ENCODE measurements at regions of chr6 and their contacts with region 1.

Region 1: GRCh38 chr6:57172136-57173055 is at the start of gene BAG2:
- DNase-seq: peak; percentile 92 to 93
- H3K4me3 ChIP-seq: peak within 1 kb of the TSS; percentile 57
- H3K4me3 Mint-ChIP-seq: peak within 1 kb of the TSS; percentile 95
- H3K27ac Mint-ChIP-seq: peak within 1 kb of the TSS; percentile 93
- H3K4me1 ChIP-seq: peaks cover 6% of the 10 kb centered on the region; the same call in 1 of the 2 replicates
- H3K4me1 Mint-ChIP-seq: peaks cover 21% of the 10 kb centered on the region
- H3K27me3 ChIP-seq: no peaks in the 10 kb centered on the region
- H3K27me3 Mint-ChIP-seq: no peaks in the 10 kb centered on the region
- CTCF ChIP-seq: peak in 1 of 2 experiments; percentile 26
- total RNA-seq, gene BAG2: 9.5 and 10.4 TPM in 2 replicates

Region 2: GRCh38 chr6:56902641-56903464 is 269.5 kb before region 1 on chr6:
- CTCF ChIA-PET with region 1: no interaction called
- POLR2A ChIA-PET with region 1: no interaction called
- intact Hi-C with region 1: loop called (anchors 5 kb)
- DNase-seq: peak in 1 of 2 experiments; percentile 13
- H3K4me3 ChIP-seq: no peak overlapping the region
- H3K4me3 Mint-ChIP-seq: peak overlapping the region; percentile 0
- H3K27ac Mint-ChIP-seq: no peak overlapping the region
- H3K4me1 ChIP-seq: 0 out of 2 replicates have a peak, but pooled peaks cover 6% of the 10 kb centered on the region
- H3K4me1 Mint-ChIP-seq: peaks cover 22% of the 10 kb centered on the region
- H3K27me3 ChIP-seq: no peaks in the 10 kb centered on the region
- H3K27me3 Mint-ChIP-seq: peaks cover 2% of the 10 kb centered on the region
- CTCF ChIP-seq: peak; percentile 67

Region 3: DNA sequence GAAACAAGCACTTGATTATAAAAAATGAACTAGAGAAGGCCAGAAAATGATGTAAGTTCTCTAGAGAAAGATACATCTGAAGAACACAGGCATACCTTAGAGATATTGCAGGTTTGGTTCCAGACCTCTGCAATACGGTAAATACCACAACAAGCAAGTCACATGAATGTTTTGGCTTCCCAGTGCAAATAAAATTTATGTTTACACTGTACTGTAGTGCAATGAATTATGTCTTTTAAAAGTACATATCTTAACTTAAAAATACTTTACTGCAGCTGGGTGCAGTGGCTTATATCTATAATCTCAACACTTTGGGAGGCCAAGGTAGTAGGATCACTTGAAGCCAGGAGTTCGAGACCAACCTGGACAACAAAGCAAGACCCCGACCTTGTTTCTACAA is 136.8 kb before region 1 on chr6:
- CTCF ChIA-PET with region 1: no interaction called
- POLR2A ChIA-PET with region 1: no interaction called
- intact Hi-C with region 1: no loop called
- DNase-seq: no peak
- H3K4me3 ChIP-seq: no peak overlapping the region
- H3K4me3 Mint-ChIP-seq: no peak overlapping the region
- H3K27ac Mint-ChIP-seq: no peak overlapping the region
- H3K4me1 ChIP-seq: no peaks in the 10 kb centered on the region
- H3K4me1 Mint-ChIP-seq: no peaks in the 10 kb centered on the region
- H3K27me3 ChIP-seq: no peaks in the 10 kb centered on the region
- H3K27me3 Mint-ChIP-seq: peaks cover 8% of the 10 kb centered on the region
- CTCF ChIP-seq: no peak

Region 4: GRCh38 chr6:57048577-57048976 is 123.8 kb before region 1 on chr6:
- CTCF ChIA-PET with region 1: no interaction called
- POLR2A ChIA-PET with region 1: no interaction called
- intact Hi-C with region 1: loop called (anchors 2 kb)
- DNase-seq: no peak
- H3K4me3 ChIP-seq: no peak overlapping the region
- H3K4me3 Mint-ChIP-seq: no peak overlapping the region
- H3K27ac Mint-ChIP-seq: no peak overlapping the region
- H3K4me1 ChIP-seq: 0 out of 2 replicates have a peak, but pooled peaks cover 5% of the 10 kb centered on the region
- H3K4me1 Mint-ChIP-seq: no peaks in the 10 kb centered on the region
- H3K27me3 ChIP-seq: no peaks in the 10 kb centered on the region
- H3K27me3 Mint-ChIP-seq: peaks cover 4% of the 10 kb centered on the region
- CTCF ChIP-seq: no peak

Region 5: GRCh38 chr6:57109880-57110279 is 62.5 kb before region 1 on chr6:
- CTCF ChIA-PET with region 1: no interaction called
- POLR2A ChIA-PET with region 1: no interaction called
- intact Hi-C with region 1: loop called (anchors 10 kb)
- DNase-seq: no peak
- H3K4me3 ChIP-seq: no peak overlapping the region
- H3K4me3 Mint-ChIP-seq: no peak overlapping the region
- H3K27ac Mint-ChIP-seq: no peak overlapping the region
- H3K4me1 ChIP-seq: no peaks in the 10 kb centered on the region; the same call in 1 of the 2 replicates
- H3K4me1 Mint-ChIP-seq: no peaks in the 10 kb centered on the region
- H3K27me3 ChIP-seq: no peaks in the 10 kb centered on the region
- H3K27me3 Mint-ChIP-seq: no peaks in the 10 kb centered on the region
- CTCF ChIP-seq: no peak

Region 6: DNA sequence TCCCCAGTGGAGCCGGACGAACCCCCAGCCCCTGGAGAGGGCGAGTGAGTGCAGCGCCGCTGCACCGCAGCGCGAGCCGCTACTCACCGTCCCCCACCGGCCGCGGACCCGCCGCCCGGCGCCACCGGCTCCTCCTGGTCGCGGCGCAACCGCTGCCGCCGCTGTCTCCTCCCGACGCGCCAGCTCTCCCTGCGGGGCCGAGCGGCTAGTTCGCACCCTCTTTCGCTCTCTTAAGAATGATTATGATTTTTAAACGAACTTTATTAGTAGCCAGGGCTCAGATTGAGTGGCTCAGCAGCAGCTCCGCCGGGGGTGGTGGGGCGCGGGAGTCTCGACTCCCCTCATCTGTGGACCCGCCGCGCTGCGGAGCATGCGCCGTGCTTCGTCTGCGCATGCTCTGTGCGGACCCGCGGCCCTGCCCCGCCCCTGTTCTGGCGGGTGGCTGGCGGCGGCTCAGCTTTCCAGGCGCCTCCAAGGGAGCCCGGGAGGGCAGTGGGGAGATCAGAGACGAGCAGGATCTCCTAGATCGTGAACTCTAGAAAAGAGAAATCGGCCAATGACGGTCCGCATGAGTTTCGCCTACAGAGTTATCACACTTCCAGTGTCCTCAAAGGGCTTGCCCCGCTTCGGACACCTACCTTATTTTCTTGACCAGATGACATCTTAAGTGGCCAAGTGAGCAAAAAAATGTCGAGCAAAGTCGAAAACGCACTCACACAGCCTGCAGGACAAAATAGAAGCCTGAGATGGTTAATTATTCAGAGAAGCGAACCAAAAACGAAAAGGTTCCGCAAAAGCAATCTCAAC is 49.7 kb after region 1 on chr6 and contains the start of gene RAB23:
- CTCF ChIA-PET with region 1: interaction called, 4 read pairs
- POLR2A ChIA-PET with region 1: interaction called, 3 read pairs
- intact Hi-C with region 1: loop called (anchors 2 kb)
- DNase-seq: peak; percentile 81 to 93
- H3K4me3 ChIP-seq: peak within 1 kb of the TSS; percentile 78
- H3K4me3 Mint-ChIP-seq: peak within 1 kb of the TSS; percentile 94
- H3K27ac Mint-ChIP-seq: peak within 1 kb of the TSS; percentile 90
- H3K4me1 ChIP-seq: peaks cover 4% of the 10 kb centered on the region; the same call in 1 of the 2 replicates
- H3K4me1 Mint-ChIP-seq: peaks cover 10% of the 10 kb centered on the region
- H3K27me3 ChIP-seq: no peaks in the 10 kb centered on the region
- H3K27me3 Mint-ChIP-seq: no peaks in the 10 kb centered on the region
- CTCF ChIP-seq: no peak
- total RNA-seq, gene RAB23: 12.6 and 13.7 TPM in 2 replicates

Measured in Caco-2 (cell line).